Right cardiac atrium (tissue), 5 donors: ENCODE measurements at regions of chr12 and their contacts with region 1.

Region 1: DNA sequence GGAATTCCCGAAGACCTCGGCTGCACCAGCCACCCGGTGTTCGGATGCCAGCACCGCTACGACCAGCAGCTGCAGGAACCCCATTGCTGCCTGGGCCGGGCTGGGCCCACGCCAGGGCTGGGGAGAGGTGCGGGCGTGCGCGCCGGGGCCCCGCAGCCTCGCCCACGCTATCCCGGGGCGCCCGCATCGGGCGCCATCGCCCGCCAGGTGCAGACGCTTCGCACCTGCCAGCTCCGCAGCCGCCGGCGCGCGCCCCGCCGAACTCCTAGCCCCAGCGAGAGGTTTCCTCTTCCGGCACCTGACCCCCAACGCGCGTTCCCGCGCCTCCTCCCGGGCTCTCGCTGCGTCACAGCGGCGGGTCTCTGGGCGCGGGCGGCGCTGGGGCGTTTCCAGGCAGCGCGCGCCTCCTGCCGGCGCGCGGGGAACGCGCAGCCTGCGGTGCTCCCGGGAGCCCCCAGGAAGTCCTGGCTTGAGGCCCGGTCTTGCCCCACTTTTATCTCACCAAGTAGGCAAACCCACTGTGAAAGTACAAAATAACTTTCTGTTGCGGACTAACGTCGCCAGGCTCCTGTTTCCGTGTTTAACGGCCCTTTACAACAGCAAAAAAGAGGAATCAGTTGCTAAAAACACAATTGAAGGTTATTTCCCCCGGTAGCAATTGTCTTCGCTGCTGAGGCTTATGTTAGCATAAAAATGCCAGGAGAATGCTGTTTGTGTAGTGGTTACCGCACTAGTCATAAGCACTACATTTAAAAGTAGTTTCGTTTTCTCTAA is at the start of gene TM7SF3:
- DNase-seq: peak; percentile 93 to 98 (median 97)
- ATAC-seq: peak; percentile 94
- H3K4me3 ChIP-seq: peak within 1 kb of the TSS; percentile 94
- H3K27ac ChIP-seq: peak within 1 kb of the TSS; percentile 90
- H3K4me1 ChIP-seq: no peaks in the 10 kb centered on the region
- H3K27me3 ChIP-seq: no peaks in the 10 kb centered on the region
- total RNA-seq, gene TM7SF3: 23.6 to 31.1 (median 26.3) TPM

Region 2: GRCh38 chr12:26853303-26854030 is 160.8 kb before region 1 on chr12:
- intact Hi-C with region 1: loop called in 1 of 4 experiments (anchors 5 kb)
- DNase-seq: peak; percentile 61 to 85 (median 79)
- ATAC-seq: peak; percentile 67 to 81
- H3K4me3 ChIP-seq: no peak overlapping the region
- H3K27ac ChIP-seq: no peak overlapping the region
- H3K4me1 ChIP-seq: no peaks in the 10 kb centered on the region
- H3K27me3 ChIP-seq: no peaks in the 10 kb centered on the region

Region 3: DNA sequence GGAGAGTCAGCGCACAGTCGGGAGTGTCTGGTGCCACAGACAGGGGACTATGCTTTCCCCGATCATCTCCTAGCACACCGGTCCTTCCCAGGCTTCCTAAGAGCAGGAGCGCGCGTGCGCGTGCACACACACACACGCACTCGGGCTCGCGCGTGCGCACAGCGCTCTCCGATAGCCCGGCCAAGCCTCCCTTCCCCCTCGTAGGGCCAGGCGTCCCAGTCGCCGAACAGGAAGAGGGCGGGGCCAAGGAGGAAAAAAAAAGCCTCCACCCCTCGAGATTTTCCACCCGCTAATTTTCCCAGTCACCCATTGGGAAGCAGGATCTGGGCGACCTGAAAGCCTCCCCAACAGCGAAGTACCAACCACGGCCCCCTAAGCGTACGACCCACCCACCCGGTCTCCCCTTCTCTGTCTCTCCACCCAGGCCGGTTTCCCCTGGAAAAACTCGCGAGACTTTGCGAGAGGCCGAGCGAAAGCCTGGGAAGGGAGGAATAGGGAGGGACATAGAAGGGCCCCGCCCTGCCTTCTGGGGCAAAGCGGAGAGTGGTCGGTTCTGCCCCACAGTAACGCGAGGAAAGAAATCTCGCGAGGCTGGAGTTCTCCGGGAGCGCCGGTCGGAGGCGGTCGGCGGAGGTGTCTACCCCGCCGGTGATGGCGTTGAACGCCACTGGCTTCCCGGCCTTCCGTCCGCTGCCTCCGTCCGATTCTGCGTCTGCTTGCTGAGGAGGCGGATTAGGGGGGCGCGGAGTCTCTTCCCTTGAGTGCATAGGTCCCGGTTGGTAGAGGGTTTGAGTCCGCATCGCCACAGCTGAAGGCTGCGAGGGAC is 76.2 kb before region 1 on chr12 and contains the starts of genes FGFR1OP2 and INTS13:
- intact Hi-C with region 1: loop called in 2 of 4 experiments (anchors 10 kb)
- DNase-seq: peak; percentile 99 to 100 (median 100)
- ATAC-seq: peak; percentile 99
- H3K4me3 ChIP-seq: peak within 1 kb of the TSS; percentile 79
- H3K27ac ChIP-seq: peak within 1 kb of the TSS; percentile 90
- H3K4me1 ChIP-seq: peaks cover 4% of the 10 kb centered on the region
- H3K27me3 ChIP-seq: no peaks in the 10 kb centered on the region
- total RNA-seq, gene FGFR1OP2: 37.9 to 43.7 (median 39.9) TPM
- total RNA-seq, gene INTS13: 14.7 to 19.8 (median 15.4) TPM

Region 4: DNA sequence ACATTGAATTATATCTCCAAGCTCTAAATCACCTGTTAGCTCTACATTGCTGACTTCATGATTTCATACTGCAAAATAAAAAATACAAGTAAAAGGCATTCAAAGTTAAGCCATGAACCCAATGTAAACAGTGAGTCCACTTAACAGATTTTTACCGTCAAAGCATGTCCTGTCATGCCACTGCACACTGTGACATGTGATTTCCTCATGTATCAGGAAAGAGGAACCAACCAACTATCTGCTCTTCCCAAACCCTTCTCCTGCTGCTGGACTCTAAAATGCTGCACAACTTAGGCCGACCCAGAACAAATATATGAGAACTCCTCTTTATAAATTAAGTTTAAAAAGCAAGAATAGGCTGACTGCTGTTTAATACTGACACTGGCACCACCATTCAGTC is 37.6 kb before region 1 on chr12:
- intact Hi-C with region 1: no loop called
- DNase-seq: no peak
- ATAC-seq: no peak
- H3K4me3 ChIP-seq: no peak overlapping the region
- H3K27ac ChIP-seq: no peak overlapping the region
- H3K4me1 ChIP-seq: no peaks in the 10 kb centered on the region
- H3K27me3 ChIP-seq: no peaks in the 10 kb centered on the region

Region 5: GRCh38 chr12:27142101-27142721 is 127.9 kb after region 1 on chr12:
- intact Hi-C with region 1: no loop called
- DNase-seq: peak in 2 of 3 donors; percentile 46 to 58
- ATAC-seq: peak; percentile 90 to 93
- H3K4me3 ChIP-seq: no peak overlapping the region
- H3K27ac ChIP-seq: no peak overlapping the region
- H3K4me1 ChIP-seq: no peaks in the 10 kb centered on the region
- H3K27me3 ChIP-seq: no peaks in the 10 kb centered on the region

Region 6: GRCh38 chr12:27305673-27306456 is 291.6 kb after region 1 on chr12:
- intact Hi-C with region 1: loop called in 3 of 4 experiments (anchors 5 to 10 kb)
- DNase-seq: no peak
- ATAC-seq: peak in 1 of 2 donors; percentile 20
- H3K4me3 ChIP-seq: no peak overlapping the region
- H3K27ac ChIP-seq: no peak overlapping the region
- H3K4me1 ChIP-seq: peaks cover 4% of the 10 kb centered on the region
- H3K27me3 ChIP-seq: no peaks in the 10 kb centered on the region